ENCODE measurements at regions of chr18 and their contacts with region 1.

Region 1: DNA sequence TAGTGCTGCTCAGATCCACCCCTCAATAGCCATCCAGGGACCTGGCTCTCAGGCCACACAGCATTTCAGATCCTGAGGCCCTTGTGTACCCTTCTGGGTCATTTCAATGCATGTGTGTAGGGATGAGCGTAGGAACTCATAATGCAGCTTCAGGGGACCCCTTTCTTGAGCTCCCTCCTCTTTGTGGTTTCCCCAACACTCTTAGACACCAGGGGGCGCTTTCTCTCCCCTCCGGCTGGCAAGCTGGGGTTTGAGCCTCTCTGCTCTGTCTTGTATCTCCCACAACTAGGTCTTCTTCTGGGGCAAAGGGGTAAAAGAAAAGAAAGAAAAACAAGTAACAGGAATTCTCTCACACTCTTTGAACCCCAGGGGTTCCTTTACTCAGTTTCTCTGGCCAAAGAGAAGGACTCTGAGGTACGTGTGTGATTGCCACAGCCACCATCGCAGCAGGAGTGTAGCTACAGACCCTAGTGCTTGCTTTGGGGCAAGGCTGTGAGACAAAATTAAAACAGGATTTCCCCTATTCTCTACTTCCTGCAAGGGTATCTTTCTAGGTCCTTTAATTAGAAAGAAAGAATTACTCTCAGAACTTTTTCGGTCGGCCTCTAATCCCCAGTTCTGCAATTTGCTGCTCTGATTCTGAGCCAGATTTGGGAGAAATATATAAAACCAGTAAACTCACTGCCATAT is 38.0 kb downstream of the CABYR start:
- DNase-seq: peak; percentile 61
- ATAC-seq: peak; percentile 61 to 68

Region 2: DNA sequence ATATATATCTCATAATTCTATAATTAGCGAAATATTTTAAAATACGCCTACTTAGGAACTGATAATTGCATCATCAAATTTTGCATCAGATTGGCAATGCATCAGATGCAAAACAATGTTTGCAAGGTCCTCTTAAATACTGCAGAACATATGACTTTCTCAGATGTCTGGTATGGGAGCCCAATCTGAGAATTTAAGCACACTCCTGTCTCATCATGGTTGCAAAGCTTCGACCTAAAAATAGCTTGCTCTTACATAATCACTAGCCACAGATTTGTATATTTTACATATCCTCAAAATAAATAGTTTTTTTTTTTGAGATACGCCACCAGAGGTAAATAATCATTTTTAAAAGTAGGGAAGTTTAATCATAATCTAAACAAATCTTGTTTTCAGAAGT is 85.2 kb after region 1 on chr18:
- intact Hi-C with region 1: loop called in 1 of 2 experiments (anchors 10 kb)
- DNase-seq: no peak
- ATAC-seq: no peak

Region 3: DNA sequence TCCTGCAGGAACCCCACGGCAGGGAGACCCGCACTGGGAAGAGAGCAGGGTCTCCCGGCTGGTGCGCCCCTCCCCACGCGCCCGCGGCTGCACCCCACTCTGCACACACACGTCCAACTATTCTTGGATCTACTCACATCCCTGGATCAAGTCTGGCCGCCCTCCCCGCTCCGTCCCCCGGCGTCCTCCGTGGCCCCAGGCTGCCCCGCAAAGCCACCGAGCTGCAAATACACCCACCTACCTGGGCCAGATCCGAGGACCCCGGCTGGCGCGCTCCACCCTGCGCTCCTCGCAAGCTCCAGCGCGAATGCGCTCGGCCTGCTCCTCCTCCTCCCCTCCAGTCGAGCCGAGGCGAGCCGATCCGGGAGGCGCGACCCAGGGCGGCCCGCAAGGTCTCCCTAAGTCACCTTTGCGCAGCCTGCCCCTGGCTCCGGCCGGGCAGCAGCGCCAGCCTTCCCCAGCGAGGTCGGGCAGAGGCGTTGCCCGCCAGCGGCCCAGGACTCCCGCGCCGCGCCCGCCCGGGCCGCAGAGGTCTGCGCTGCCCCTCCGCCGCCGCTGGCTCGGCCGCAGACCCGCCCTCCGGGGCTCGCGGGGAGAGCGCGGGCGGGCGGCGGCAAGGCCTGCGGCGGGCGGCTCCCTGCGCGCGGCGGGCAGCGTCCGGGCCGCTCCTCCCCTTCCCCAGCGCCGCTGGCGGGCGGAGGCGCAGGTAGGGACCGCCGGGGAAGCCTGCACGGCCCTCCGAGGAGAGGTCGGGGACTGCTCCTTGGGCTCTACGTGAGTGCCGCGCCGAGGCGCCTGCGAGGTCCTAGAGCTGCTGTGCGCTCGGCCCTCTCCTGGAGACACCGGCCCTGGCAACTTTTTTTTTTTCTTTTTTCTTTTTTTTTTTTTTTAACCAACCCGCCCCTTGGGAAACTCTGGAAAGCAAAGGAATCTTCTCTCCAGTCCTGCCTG is 94.8 kb after region 1 on chr18:
- intact Hi-C with region 1: loop called (anchors 2 to 10 kb)
- DNase-seq: peak; percentile 77
- ATAC-seq: peak; percentile 89 to 91

Region 4: DNA sequence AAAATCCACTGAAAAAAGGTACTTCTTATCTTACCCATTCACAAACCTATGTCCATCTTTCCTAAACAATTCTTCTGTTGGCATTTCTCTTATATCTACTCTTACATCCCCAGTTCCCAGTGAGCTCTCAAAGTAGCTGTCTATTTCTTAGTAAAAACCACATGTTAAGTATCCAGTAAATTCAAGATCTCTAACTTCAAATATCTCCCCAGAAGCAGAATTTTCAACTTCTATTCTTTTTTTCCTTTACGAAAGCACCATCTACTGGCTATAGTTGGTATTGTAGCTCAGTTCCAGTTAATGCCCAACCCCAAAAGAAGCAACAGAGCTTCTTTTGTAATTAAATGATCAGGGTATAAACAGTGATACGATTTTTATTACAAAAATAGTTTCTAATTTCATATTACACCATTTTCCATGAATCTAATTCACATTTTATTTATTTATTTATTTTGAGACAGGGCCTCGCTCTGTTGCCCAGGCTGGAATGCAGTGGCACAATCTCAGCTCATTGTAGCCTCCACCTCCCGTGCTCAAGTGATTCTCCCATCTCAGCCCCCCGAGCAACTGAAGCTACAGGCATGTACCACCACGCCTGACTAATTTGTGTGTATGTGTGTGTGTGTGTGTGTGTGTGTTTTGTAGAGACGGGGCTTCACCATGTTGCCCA is 312.1 kb after region 1 on chr18:
- intact Hi-C with region 1: loop called in 1 of 2 experiments (anchors 5 kb)
- DNase-seq: no peak
- ATAC-seq: peak in 1 of 2 donors; percentile 53